ENCODE measurements at regions of chr4 and their contacts with region 1.

Region 1: DNA sequence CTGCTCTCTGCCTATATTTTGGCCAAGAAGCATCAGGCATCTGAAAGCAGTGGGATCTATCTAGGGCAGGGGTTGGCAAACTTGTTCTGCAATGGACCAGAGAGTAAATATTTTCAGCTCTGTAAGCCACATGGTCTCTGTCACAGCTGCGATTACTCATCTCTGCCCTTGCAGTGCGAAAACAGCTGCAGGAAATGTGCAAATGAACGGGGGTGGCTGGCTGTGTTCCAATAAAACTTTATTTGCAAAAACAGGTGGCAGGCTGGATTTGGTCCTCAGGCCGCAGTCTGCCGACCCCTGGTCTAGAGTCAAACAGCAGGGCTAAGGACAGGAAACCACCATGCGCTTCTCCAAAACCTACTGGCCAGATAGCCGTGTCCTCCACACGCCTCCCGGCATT is 48.6 kb downstream of the ACOX3 start:
- DNase-seq: peak; percentile 91
- H3K4me3 ChIP-seq: no peak overlapping the region
- H3K27ac ChIP-seq: peak overlapping the region; percentile 75 to 82 (median 78)
- H3K4me1 ChIP-seq: peaks cover 0 to 46% (median 41%) of the 10 kb centered on the region in 4 donors
- H3K27me3 ChIP-seq: no peaks in the 10 kb centered on the region
- CTCF ChIP-seq: no peak
- EP300 ChIP-seq: peak in 2 of 4 donors; percentile 45 to 85
- POLR2A ChIP-seq: no peak

Region 2: DNA sequence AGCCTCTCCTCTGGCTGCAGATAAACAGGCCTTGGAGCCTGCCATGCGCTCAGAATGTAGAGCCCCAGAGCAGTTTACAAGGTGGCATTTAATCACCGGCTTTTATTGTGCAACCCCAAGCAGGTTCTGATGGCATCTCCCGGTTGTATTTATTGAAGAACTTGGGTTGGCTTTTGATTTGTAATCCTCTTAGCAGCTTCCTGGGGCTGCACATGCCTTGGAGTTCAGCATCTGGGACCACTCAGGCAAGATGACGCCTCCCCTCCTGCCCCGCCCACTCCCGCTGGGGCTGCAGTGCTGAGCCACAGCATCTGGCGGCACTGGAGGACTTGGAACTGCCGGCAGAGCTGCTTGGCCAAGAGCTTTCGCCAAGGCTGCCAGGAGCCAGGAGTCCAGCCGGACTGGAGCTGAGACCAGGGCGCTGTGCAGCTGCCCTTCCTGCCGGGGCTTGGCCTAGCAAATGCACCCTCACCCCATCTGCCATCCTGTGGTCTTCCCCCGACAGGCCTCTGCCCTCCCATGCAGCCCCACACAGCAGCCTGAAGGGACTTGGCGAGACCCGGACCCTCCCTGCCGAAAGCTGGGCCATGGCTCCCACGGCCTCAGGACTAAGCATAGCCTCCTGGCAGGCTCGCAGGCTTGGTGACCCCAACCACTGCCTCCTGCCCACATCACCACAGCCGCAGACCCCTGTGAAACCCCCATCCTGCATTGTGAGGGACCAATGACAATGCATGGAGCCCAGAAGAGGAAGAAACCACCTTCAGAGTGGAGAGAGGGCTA is 117.0 kb before region 1 on chr4:
- intact Hi-C with region 1: loop called (anchors 1 kb)
- DNase-seq: peak; percentile 98
- H3K4me3 ChIP-seq: no peak overlapping the region
- H3K27ac ChIP-seq: peak overlapping the region; percentile 63 to 89 (median 84)
- H3K4me1 ChIP-seq: peaks cover 0 to 98% (median 92%) of the 10 kb centered on the region in 4 donors
- H3K27me3 ChIP-seq: no peaks in the 10 kb centered on the region
- CTCF ChIP-seq: peak in 3 of 4 experiments; percentile 23 to 51 (median 50)
- EP300 ChIP-seq: peak in 2 of 4 donors; percentile 76
- POLR2A ChIP-seq: no peak

Region 3: GRCh38 chr4:8592366-8593263 is 200.6 kb after region 1 on chr4 and contains the start of gene CPZ:
- intact Hi-C with region 1: no loop called
- DNase-seq: no peak
- H3K4me3 ChIP-seq: peak within 1 kb of the TSS in 3 of 4 donors; percentile 12 to 31 (median 27)
- H3K27ac ChIP-seq: no peak within 1 kb of the TSS
- H3K4me1 ChIP-seq: peaks cover 0 to 22% (median 20%) of the 10 kb centered on the region in 4 donors
- H3K27me3 ChIP-seq: peaks cover 13 to 43% (median 32%) of the 10 kb centered on the region in 3 donors
- CTCF ChIP-seq: no peak
- EP300 ChIP-seq: no peak
- POLR2A ChIP-seq: no peak
- total RNA-seq, gene CPZ: 0.54 to 8.3 (median 3.0) TPM